ENCODE measurements at regions of chr9 and their contacts with region 1.

Region 1: GRCh38 chr9:129712634-129713401 is 40.0 kb downstream of the PTGES start:
- DNase-seq: no peak
- H3K4me3 Mint-ChIP-seq: no peak overlapping the region
- H3K27ac Mint-ChIP-seq: no peak overlapping the region
- H3K4me1 Mint-ChIP-seq: peaks cover 17% of the 10 kb centered on the region
- H3K27me3 Mint-ChIP-seq: peaks cover 9% of the 10 kb centered on the region

Region 2: DNA sequence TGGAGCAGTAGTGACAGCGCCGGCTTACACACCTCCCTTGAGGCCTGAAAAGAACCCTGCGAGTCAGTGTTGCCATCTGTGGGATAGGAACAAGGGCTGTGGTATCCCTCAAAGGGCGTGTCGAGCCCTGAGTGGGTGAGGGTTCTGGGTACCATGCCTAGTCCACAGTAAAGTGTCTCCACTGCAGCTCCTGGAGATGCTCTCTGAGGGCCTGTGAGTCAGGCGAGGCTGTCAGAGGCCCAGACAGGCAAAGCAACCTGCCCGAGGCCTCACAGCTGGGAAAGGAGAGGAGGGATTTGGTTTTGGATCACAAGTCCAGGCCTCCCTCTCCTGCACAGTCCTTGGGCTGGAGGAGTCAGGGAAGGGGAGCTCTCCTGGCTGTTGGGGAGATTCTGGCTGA is 41.3 kb before region 1 on chr9:
- intact Hi-C with region 1: loop called (anchors 5 kb)
- DNase-seq: peak; percentile 62
- H3K4me3 Mint-ChIP-seq: peak overlapping the region; percentile 44
- H3K27ac Mint-ChIP-seq: peak overlapping the region; percentile 60
- H3K4me1 Mint-ChIP-seq: peaks cover 5% of the 10 kb centered on the region
- H3K27me3 Mint-ChIP-seq: peaks cover 9% of the 10 kb centered on the region

Region 3: DNA sequence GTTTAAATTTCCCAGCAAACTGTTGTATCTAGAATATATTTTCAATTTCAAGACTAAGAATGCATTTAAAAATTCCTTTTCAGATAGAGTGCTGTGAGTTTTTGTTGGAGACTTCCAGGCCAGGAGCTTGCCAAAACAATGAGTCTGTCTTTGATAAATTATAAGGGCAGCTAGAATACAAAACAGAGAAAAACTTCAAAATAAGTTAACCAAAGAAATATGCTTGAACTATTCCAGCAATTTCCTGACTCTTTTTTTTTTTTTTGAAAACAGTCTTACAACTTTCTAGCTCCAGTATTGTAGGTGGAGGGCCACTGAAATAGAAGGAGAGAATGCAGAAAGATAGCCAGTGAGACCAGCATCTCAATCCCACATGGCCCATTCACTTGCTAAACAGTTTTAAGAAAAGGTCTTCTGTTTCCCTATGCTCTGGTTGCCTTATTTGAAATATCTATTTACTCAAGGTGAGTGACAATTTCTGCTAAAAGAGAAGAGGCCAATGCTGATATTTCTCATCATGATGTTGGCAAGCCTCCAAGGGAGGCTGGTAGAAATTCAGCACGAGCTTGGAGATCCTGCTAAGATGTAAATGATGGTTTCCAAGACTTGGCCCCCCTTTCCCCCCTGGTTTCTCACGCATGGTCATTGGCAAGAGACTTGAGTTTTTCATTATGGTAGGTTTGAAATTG is 225.6 kb after region 1 on chr9:
- intact Hi-C with region 1: no loop called
- DNase-seq: no peak
- H3K4me3 Mint-ChIP-seq: no peak overlapping the region
- H3K27ac Mint-ChIP-seq: peak overlapping the region; percentile 61
- H3K4me1 Mint-ChIP-seq: peaks cover 40% of the 10 kb centered on the region
- H3K27me3 Mint-ChIP-seq: no peaks in the 10 kb centered on the region